Activated naive CD4-positive, alpha-beta T cell treated with anti-CD3 and anti-CD28 coated beads for 36 hours (primary cell): ENCODE measurements at regions of chr1 and their contacts with region 1.

Region 1: DNA sequence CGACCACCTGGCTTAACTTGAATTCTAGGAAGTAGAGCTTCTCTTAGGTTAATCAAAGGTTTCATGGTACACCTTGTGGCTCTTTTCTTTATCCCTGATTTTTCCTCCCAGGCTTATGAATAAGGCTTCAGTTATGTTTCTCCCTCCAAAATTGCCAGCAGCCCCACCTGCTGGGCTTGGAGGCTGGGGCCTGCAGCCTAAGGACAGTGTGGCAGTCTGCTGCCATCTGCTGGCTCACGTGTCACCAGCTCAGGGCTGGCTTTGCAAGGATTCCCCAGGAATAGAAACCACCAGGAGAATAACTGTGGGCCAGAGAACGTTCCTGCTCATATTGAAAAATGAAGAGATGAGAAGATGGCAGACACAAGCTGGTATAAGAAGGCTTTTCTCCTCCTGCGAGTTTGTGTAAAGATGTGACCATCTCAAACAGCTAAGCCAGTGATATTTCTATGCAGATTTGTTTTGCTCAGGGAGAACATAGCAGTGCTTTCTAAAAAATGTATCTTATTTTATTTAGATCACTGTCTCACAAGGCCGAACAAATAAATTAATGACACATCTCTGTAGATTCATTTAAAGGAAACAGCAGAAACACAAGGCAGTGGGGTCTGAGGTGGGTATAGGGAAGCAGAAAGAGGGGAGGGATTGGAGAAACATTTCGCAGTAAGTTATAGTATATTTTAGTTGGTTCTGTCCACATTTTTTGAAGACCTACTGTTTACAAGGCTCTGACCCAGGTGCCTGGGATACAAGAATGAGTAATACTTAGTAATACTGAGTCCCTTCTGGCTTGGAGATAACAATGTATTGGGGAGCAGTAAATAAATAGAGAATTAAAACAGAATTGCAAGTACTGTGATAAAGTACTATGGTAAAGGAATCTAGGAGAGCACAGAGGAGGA is 291.1 kb upstream of the SGIP1 start:
- DNase-seq: peak; percentile 87
- H3K4me3 Mint-ChIP-seq: no peak overlapping the region
- H3K27ac Mint-ChIP-seq: no peak overlapping the region
- H3K4me1 Mint-ChIP-seq: peaks cover 30% of the 10 kb centered on the region
- H3K27me3 Mint-ChIP-seq: peaks cover 6% of the 10 kb centered on the region

Region 2: GRCh38 chr1:65687428-65688214 is 555.3 kb before region 1 on chr1:
- CTCF ChIA-PET with region 1: interaction called, 3 read pairs
- intact Hi-C with region 1: loop called (anchors 10 kb)
- DNase-seq: peak; percentile 88
- H3K4me3 Mint-ChIP-seq: no peak overlapping the region
- H3K27ac Mint-ChIP-seq: no peak overlapping the region
- H3K4me1 Mint-ChIP-seq: peaks cover 6% of the 10 kb centered on the region
- H3K27me3 Mint-ChIP-seq: peaks cover 9% of the 10 kb centered on the region

Region 3: DNA sequence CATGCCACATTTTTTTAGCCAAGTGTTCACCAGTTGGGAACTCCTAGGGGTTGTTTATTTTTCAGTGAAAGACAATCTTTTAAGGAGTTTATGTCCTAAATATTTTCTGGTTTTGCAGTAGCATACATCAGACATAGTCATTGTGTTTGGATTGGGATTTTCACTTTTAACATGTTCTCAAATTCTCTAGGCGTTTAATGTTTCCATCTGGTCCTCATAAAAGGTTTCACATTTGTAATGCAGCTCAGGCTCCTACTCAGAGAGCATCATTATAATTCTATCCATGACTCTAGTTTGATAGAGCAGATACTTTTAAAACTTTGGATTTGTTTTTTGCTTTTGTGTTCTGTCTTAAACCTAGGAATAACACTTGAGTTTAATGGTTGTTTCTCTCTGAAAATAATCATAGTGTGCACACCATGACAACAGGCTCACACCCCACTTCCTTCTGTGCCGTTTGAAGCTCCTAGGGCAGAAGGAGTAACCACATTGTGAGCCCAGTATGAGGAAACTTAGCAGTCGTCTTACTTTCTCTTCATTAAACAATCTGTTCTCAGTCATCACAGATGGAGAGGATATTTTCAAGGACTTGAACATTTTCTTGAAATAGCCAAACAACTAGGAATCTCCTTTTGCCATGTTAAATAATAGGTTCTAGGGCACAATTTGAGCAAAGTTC is 230.7 kb before region 1 on chr1:
- CTCF ChIA-PET with region 1: interaction called, 4 read pairs
- intact Hi-C with region 1: loop called (anchors 5 kb)
- DNase-seq: no peak
- H3K4me3 Mint-ChIP-seq: no peak overlapping the region
- H3K27ac Mint-ChIP-seq: no peak overlapping the region
- H3K4me1 Mint-ChIP-seq: peaks cover 6% of the 10 kb centered on the region
- H3K27me3 Mint-ChIP-seq: peaks cover 10% of the 10 kb centered on the region

Region 4: GRCh38 chr1:66214901-66215300 is 28.0 kb before region 1 on chr1:
- CTCF ChIA-PET with region 1: interaction called, 9 read pairs
- intact Hi-C with region 1: loop called (anchors 1 kb)
- DNase-seq: peak; percentile 57
- H3K4me3 Mint-ChIP-seq: no peak overlapping the region
- H3K27ac Mint-ChIP-seq: peak overlapping the region; percentile 1
- H3K4me1 Mint-ChIP-seq: peaks cover 17% of the 10 kb centered on the region
- H3K27me3 Mint-ChIP-seq: no peaks in the 10 kb centered on the region

Region 5: DNA sequence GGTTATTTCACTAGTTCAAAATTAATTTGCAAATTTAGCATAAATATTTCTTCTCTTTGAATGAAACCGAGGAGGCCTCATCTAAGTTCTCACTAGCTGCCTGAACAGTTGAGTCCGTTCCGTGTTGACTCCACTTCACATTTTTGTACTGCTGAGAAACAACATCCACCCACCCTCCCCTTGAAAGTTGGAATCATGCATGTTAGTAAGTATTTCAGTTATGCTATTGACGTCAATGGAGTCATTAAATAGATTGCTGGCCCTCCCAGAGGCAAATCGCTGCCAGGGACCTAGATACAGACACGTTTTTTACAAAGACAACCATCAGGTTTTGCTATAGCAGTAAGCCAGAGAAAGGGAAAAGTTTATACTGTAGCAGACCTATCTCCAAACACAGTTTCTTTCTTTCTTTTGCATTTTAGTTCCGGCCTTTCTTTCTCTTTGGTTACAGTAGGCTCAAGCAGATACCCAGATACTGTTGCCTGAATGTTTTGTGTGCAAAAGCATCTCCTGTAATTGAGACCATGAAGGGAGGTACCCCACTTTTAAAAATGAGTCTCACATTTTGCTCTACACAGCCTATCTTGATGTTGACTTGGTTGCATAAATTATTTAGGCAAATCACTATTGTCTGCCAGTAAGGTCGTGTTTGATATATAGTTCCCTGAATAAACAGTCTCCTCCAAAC is 28.5 kb after region 1 on chr1:
- CTCF ChIA-PET with region 1: interaction called, 11 read pairs
- intact Hi-C with region 1: loop called (anchors 1 kb)
- DNase-seq: peak; percentile 84
- H3K4me3 Mint-ChIP-seq: peak overlapping the region; percentile 54
- H3K27ac Mint-ChIP-seq: peak overlapping the region; percentile 90
- H3K4me1 Mint-ChIP-seq: peaks cover 74% of the 10 kb centered on the region
- H3K27me3 Mint-ChIP-seq: no peaks in the 10 kb centered on the region

Region 6: GRCh38 chr1:66374561-66375111 is 131.7 kb after region 1 on chr1:
- CTCF ChIA-PET with region 1: interaction called, 10 read pairs
- intact Hi-C with region 1: loop called (anchors 1 kb)
- DNase-seq: peak; percentile 77
- H3K4me3 Mint-ChIP-seq: peak overlapping the region; percentile 50
- H3K27ac Mint-ChIP-seq: peak overlapping the region; percentile 94
- H3K4me1 Mint-ChIP-seq: peaks cover 76% of the 10 kb centered on the region
- H3K27me3 Mint-ChIP-seq: no peaks in the 10 kb centered on the region

Region 7: DNA sequence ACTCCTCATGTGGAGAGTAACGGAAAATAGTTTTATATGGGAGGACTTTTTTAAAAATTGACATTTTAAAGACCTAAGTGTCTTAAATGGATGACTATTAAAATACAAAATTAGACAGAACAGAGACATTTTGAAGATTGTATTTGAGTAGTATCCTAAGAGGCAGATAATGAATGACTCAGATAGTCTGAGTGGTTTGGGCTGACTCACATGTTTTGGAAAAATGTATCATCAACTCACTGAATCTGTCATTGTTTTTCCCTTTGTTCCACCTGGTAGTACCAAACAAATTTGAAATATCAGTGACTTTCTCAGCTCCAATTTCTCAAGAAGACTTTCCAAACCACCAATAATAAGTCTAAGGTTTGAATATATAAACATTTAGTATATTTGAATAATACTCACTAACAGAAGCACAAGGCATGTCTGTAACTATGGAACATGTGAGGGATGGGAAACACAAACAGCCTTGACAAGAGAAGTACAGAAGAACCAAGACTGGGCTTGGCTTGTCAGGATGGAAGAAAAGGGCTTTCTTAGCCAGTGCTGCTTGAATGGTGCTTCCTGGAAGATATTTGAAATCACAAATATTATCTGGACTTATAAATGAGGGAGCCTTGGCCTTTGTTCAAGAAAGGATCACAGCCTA is 381.6 kb after region 1 on chr1:
- CTCF ChIA-PET with region 1: no interaction called
- intact Hi-C with region 1: loop called (anchors 10 kb)
- DNase-seq: no peak
- H3K4me3 Mint-ChIP-seq: no peak overlapping the region
- H3K27ac Mint-ChIP-seq: no peak overlapping the region
- H3K4me1 Mint-ChIP-seq: peaks cover 3% of the 10 kb centered on the region
- H3K27me3 Mint-ChIP-seq: no peaks in the 10 kb centered on the region